Heart left ventricle (tissue), 16 donors: ENCODE measurements at regions of chr15 and their contacts with region 1.

Region 1: DNA sequence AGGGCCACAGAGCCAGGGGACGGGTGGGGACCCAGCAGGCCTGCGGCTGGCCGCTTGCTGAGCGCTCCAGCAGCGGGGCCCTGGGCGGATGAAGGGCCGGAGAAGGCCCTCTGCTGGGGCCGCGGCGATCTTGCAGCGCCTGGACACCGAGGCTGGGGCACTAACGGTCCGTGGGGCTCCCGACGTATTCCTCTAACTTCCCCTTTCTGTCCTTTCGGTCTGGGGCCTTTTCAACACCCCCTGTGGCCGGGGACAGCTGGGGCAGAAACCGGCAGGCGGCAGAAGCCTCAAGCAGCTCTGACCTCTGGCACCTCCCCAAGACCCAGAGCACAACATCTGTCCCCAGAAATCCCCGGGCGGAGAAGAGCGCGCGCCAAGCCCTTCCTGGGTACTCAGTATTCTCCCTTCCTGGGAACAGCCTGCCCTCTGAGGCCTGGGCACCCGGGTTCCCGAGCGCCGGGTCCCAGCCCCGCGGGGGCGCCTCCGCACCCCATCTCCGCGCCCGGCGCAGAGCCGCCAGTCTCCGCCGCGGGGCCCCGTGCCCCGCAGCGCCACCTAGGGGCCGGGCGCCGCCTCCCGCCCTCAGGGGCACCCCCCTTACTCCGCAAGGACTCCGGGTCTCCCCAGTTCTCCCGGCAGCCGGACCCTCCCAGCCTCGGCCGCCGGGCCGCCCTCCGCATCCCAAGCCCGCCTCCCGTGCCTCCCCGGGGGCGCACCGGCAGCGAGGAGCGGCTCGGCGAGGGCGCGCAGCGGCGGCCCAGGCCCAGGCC is 582 bp upstream of the SLCO3A1 start:
- DNase-seq: peak; percentile 82 to 92 (median 84)
- ATAC-seq: peak; percentile 77 to 91 (median 84)
- H3K4me3 ChIP-seq: peak overlapping the region; percentile 42 to 95 (median 80)
- H3K27ac ChIP-seq: peak overlapping the region; percentile 85 to 99 (median 98)
- H3K4me1 ChIP-seq: peaks cover 15 to 67% (median 47%) of the 10 kb centered on the region in 12 donors
- H3K27me3 ChIP-seq: no peaks in the 10 kb centered on the region
- CTCF ChIP-seq: peak; percentile 35 to 84 (median 71)
- POLR2A ChIP-seq: peak in 1 of 2 donors; percentile 31

Region 2: DNA sequence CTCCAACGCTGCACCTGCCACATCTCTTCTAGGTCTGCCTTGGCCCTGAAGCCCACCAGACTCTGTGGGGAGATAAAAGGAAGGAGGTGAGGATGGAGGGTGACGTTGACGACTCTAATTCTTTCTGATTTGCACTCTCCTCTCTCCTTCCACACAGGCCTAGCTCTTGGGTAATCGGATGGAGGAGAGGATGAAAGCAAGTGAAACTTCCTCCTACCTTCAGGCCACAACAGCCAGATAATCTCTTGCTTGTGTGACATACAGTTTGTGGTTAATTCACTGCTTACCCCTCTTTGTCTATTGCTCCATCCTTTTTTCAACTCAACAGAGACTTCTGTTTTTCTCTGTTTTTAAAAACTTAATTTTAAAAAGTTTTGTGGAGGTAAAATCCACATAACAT is 544.7 kb before region 1 on chr15:
- intact Hi-C with region 1: loop called (anchors 2 to 10 kb)
- DNase-seq: no peak
- ATAC-seq: no peak
- H3K4me3 ChIP-seq: no peak overlapping the region
- H3K27ac ChIP-seq: no peak overlapping the region
- H3K4me1 ChIP-seq: peaks cover 0 to 20% (median 5%) of the 10 kb centered on the region in 12 donors
- H3K27me3 ChIP-seq: peaks cover 0 to 9% (median 0%) of the 10 kb centered on the region in 9 donors
- CTCF ChIP-seq: no peak
- POLR2A ChIP-seq: no peak

Region 3: GRCh38 chr15:91611561-91612323 is 241.2 kb before region 1 on chr15:
- intact Hi-C with region 1: loop called in 1 of 10 experiments (anchors 10 kb)
- DNase-seq: no peak
- ATAC-seq: no peak
- H3K4me3 ChIP-seq: no peak overlapping the region
- H3K27ac ChIP-seq: no peak overlapping the region
- H3K4me1 ChIP-seq: no peaks in the 10 kb centered on the region
- H3K27me3 ChIP-seq: no peaks in the 10 kb centered on the region
- CTCF ChIP-seq: no peak
- POLR2A ChIP-seq: no peak

Region 4: DNA sequence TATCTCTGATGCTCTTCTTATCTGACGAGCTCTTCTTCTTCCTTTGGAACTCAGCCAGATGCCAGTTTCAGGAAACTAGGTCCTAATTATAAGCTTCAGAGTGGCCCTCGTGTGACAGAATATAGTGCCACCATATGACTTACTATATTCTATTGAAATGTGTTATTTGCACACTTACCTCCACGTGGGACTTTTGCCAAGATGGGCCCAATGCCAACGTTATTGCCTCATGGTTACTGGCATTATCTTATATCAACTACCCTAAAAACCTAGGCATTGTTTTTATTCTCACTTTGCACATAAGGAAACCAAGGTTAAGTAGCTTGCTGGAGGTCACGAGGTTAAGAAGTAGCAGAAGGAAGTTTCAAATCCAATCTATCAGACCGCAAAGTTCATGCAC is 70.7 kb before region 1 on chr15:
- intact Hi-C with region 1: loop called in 1 of 10 experiments (anchors 5 kb)
- DNase-seq: no peak
- ATAC-seq: no peak
- H3K4me3 ChIP-seq: no peak overlapping the region
- H3K27ac ChIP-seq: peak overlapping the region in 7 of 12 donors; percentile 22 to 79 (median 62)
- H3K4me1 ChIP-seq: peaks cover 0 to 32% (median 1%) of the 10 kb centered on the region in 12 donors
- H3K27me3 ChIP-seq: peaks cover 0 to 7% (median 0%) of the 10 kb centered on the region in 9 donors
- CTCF ChIP-seq: no peak
- POLR2A ChIP-seq: no peak

Region 5: GRCh38 chr15:91926908-91927270 is 74.0 kb after region 1 on chr15:
- intact Hi-C with region 1: loop called in 3 of 10 experiments (anchors 2 to 5 kb)
- DNase-seq: no peak
- ATAC-seq: peak; percentile 33 to 54 (median 36)
- H3K4me3 ChIP-seq: no peak overlapping the region
- H3K27ac ChIP-seq: peak overlapping the region in 11 of 12 donors; percentile 4 to 69 (median 47)
- H3K4me1 ChIP-seq: peaks cover 6 to 85% (median 76%) of the 10 kb centered on the region in 12 donors
- H3K27me3 ChIP-seq: no peaks in the 10 kb centered on the region
- CTCF ChIP-seq: no peak
- POLR2A ChIP-seq: no peak

Region 6: DNA sequence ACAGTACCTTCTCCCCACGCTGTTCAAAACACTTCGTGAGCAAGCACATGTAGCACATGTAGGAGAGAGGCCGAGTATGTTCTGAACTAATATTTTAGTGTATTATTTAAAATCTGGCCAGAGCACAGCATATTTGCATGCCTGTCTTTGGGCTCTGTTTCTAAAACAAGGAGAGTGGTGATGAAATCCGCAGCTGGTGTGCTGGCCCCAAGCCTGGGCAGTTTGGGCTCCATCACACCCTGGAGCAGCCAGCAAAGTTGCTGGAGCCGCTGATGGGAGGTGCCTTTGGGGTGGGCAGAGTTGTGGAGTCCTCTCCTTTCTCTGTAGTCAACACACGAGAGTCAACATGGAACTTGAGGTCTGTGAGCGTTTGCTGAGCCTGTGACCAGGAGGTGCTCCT is 117.2 kb after region 1 on chr15:
- intact Hi-C with region 1: loop called in 3 of 10 experiments (anchors 5 to 10 kb)
- DNase-seq: peak; percentile 63 to 88 (median 81)
- ATAC-seq: peak; percentile 81 to 87 (median 83)
- H3K4me3 ChIP-seq: no peak overlapping the region
- H3K27ac ChIP-seq: peak overlapping the region in 10 of 12 donors; percentile 35 to 72 (median 57)
- H3K4me1 ChIP-seq: peaks cover 4 to 85% (median 75%) of the 10 kb centered on the region in 12 donors
- H3K27me3 ChIP-seq: no peaks in the 10 kb centered on the region
- CTCF ChIP-seq: no peak
- POLR2A ChIP-seq: no peak